ENCODE measurements at regions of chr18 and their contacts with region 1.

Region 1: DNA sequence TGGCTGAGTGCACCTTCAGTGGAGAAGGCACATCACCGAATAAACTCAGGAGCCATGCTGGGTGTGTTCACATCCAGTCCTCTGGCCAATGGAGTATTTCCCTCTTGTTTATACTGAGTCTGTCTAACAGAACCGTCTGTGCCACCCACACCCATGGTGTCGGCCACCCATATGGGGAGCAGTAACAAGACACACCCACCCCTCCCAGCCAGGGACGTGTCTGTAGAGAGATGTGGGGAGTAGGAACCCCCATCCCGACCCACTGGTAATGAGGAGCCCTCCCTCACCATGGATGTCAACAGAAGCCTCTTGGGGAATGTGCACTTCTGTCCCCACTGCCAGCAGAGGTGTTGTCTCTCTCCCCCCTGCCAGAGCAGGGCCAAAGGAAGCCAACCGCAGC is 37.1 kb downstream of the KCNG2 start:
- DNase-seq: no peak
- ATAC-seq: no peak
- H3K4me3 ChIP-seq: no peak overlapping the region
- H3K27ac ChIP-seq: no peak overlapping the region
- H3K4me1 ChIP-seq: no peaks in the 10 kb centered on the region
- H3K27me3 ChIP-seq: peaks cover 0 to 53% (median 22%) of the 10 kb centered on the region in 7 donors
- CTCF ChIP-seq: no peak

Region 2: GRCh38 chr18:79657342-79657985 is 177.4 kb before region 1 on chr18:
- intact Hi-C with region 1: no loop called
- DNase-seq: no peak
- ATAC-seq: no peak
- H3K4me3 ChIP-seq: no peak overlapping the region
- H3K27ac ChIP-seq: no peak overlapping the region
- H3K4me1 ChIP-seq: no peaks in the 10 kb centered on the region
- H3K27me3 ChIP-seq: peaks cover 0 to 15% (median 7%) of the 10 kb centered on the region in 7 donors
- CTCF ChIP-seq: no peak

Region 3: GRCh38 chr18:79698668-79699335 is 136.0 kb before region 1 on chr18:
- intact Hi-C with region 1: no loop called
- DNase-seq: no peak
- ATAC-seq: peak in 5 of 8 donors; percentile 22 to 62 (median 53)
- H3K4me3 ChIP-seq: no peak overlapping the region
- H3K27ac ChIP-seq: peak overlapping the region in 3 of 10 donors; percentile 5 to 22 (median 9)
- H3K4me1 ChIP-seq: no peaks in the 10 kb centered on the region
- H3K27me3 ChIP-seq: no peaks in the 10 kb centered on the region
- CTCF ChIP-seq: no peak

Region 4: DNA sequence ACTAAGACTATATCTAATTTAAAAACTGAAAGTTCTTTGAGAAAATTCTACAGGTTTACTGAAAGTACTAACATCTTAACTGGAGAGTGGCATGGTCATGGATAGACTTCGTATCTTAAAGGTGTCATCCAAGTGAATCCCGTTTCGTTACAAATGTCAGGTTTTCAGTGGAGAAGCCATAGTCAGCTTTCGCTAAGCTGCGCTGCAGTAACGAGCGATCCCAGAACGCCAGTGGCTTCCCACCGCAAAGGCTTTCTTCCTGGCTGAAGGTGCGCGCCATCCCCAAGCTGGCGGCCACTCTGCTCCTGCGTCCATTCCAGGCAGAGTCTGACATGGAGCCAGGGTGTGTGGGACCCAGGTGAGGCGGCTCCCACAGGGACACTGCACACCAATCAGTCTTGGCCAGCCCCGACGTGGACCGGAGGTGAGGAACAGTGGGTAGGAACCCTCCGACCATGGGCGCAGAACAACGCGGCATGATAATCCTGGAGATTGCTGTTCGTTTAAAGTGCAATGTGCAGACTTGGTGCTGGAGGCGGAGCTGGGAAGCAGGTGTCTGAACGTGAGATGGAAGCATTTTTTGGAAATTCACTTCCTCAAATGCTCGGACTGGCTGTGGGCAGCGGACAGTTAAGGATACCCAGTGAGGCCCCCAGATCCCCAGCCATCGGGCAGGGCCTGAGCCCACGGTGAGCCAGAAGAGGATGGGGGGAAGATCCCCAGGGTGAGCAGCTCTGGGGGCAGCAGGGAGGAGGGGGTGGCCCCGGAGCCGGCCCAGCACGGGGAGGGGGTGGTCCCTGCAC is 64.9 kb before region 1 on chr18:
- intact Hi-C with region 1: loop called in 1 of 10 experiments (anchors 10 kb)
- DNase-seq: no peak
- ATAC-seq: no peak
- H3K4me3 ChIP-seq: no peak overlapping the region
- H3K27ac ChIP-seq: no peak overlapping the region
- H3K4me1 ChIP-seq: no peaks in the 10 kb centered on the region
- H3K27me3 ChIP-seq: peaks cover 0 to 41% (median 8%) of the 10 kb centered on the region in 7 donors
- CTCF ChIP-seq: no peak

Measured in heart right ventricle (tissue), 16 donors.